CD4-positive, alpha-beta memory T cell (primary cell): ENCODE measurements at regions of chr5 and their contacts with region 1.

Region 1: GRCh38 chr5:157820593-157821252 is 38.2 kb downstream of the CLINT1 start:
- DNase-seq: peak in 4 of 5 donors; percentile 23 to 28 (median 27)
- H3K4me3 ChIP-seq: no peak overlapping the region
- H3K4me3 Mint-ChIP-seq: peak overlapping the region in 1 of 8 donors; percentile 28
- H3K27ac ChIP-seq: no peak overlapping the region
- H3K27ac Mint-ChIP-seq: peak overlapping the region in 5 of 7 donors; percentile 14 to 73 (median 61)
- H3K4me1 ChIP-seq: peaks cover 9% of the 10 kb centered on the region
- H3K4me1 Mint-ChIP-seq: peaks cover 23 to 41% (median 33%) of the 10 kb centered on the region in 4 donors
- H3K27me3 ChIP-seq: no peaks in the 10 kb centered on the region
- H3K27me3 Mint-ChIP-seq: no peaks in the 10 kb centered on the region

Region 2: GRCh38 chr5:157721159-157721558 is 99.6 kb before region 1 on chr5:
- CTCF ChIA-PET with region 1: no interaction called
- POLR2A ChIA-PET with region 1: no interaction called
- intact Hi-C with region 1: no loop called
- DNase-seq: no peak
- H3K4me3 ChIP-seq: no peak overlapping the region
- H3K4me3 Mint-ChIP-seq: no peak overlapping the region
- H3K27ac ChIP-seq: no peak overlapping the region
- H3K27ac Mint-ChIP-seq: no peak overlapping the region
- H3K4me1 ChIP-seq: peaks cover 21% of the 10 kb centered on the region
- H3K4me1 Mint-ChIP-seq: peaks cover 15 to 26% (median 20%) of the 10 kb centered on the region in 4 donors
- H3K27me3 ChIP-seq: no peaks in the 10 kb centered on the region
- H3K27me3 Mint-ChIP-seq: no peaks in the 10 kb centered on the region

Region 3: GRCh38 chr5:157858527-157859226 is 38.0 kb after region 1 on chr5 and contains the start of gene CLINT1:
- CTCF ChIA-PET with region 1: interaction called, 4 read pairs
- POLR2A ChIA-PET with region 1: interaction called, 3 read pairs
- intact Hi-C with region 1: loop called (anchors 5 kb)
- DNase-seq: peak; percentile 81 to 88 (median 85)
- H3K4me3 ChIP-seq: peak within 1 kb of the TSS; percentile 54 to 82
- H3K4me3 Mint-ChIP-seq: peak within 1 kb of the TSS; percentile 94 to 99 (median 95)
- H3K27ac ChIP-seq: peak within 1 kb of the TSS; percentile 85
- H3K27ac Mint-ChIP-seq: peak within 1 kb of the TSS; percentile 94 to 99 (median 97)
- H3K4me1 ChIP-seq: peaks cover 59% of the 10 kb centered on the region
- H3K4me1 Mint-ChIP-seq: peaks cover 49 to 74% (median 60%) of the 10 kb centered on the region in 4 donors
- H3K27me3 ChIP-seq: no peaks in the 10 kb centered on the region
- H3K27me3 Mint-ChIP-seq: no peaks in the 10 kb centered on the region
- total RNA-seq, gene CLINT1: 70.5 to 73.9 TPM

Region 4: GRCh38 chr5:157917899-157918809 is 97.4 kb after region 1 on chr5:
- CTCF ChIA-PET with region 1: interaction called, 5 read pairs
- POLR2A ChIA-PET with region 1: no interaction called
- intact Hi-C with region 1: loop called (anchors 1 kb)
- DNase-seq: peak; percentile 26 to 52 (median 41)
- H3K4me3 ChIP-seq: no peak overlapping the region
- H3K4me3 Mint-ChIP-seq: peak overlapping the region in 5 of 8 donors; percentile 39 to 81 (median 63)
- H3K27ac ChIP-seq: no peak overlapping the region
- H3K27ac Mint-ChIP-seq: peak overlapping the region in 6 of 7 donors; percentile 46 to 94 (median 49)
- H3K4me1 ChIP-seq: peaks cover 23% of the 10 kb centered on the region
- H3K4me1 Mint-ChIP-seq: peaks cover 22 to 28% (median 27%) of the 10 kb centered on the region in 4 donors
- H3K27me3 ChIP-seq: no peaks in the 10 kb centered on the region
- H3K27me3 Mint-ChIP-seq: no peaks in the 10 kb centered on the region

Region 5: GRCh38 chr5:157994906-157995519 is 174.3 kb after region 1 on chr5:
- CTCF ChIA-PET with region 1: interaction called, 15 read pairs
- POLR2A ChIA-PET with region 1: no interaction called
- intact Hi-C with region 1: loop called (anchors 1 kb)
- DNase-seq: peak; percentile 31 to 40 (median 34)
- H3K4me3 ChIP-seq: peak overlapping the region; percentile 2 to 15
- H3K4me3 Mint-ChIP-seq: peak overlapping the region; percentile 66 to 84 (median 76)
- H3K27ac ChIP-seq: no peak overlapping the region
- H3K27ac Mint-ChIP-seq: peak overlapping the region in 2 of 7 donors; percentile 11 to 76
- H3K4me1 ChIP-seq: peaks cover 26% of the 10 kb centered on the region
- H3K4me1 Mint-ChIP-seq: peaks cover 16 to 33% (median 21%) of the 10 kb centered on the region in 4 donors
- H3K27me3 ChIP-seq: peaks cover 14% of the 10 kb centered on the region
- H3K27me3 Mint-ChIP-seq: peaks cover 26 to 28% of the 10 kb centered on the region in 2 donors

Region 6: DNA sequence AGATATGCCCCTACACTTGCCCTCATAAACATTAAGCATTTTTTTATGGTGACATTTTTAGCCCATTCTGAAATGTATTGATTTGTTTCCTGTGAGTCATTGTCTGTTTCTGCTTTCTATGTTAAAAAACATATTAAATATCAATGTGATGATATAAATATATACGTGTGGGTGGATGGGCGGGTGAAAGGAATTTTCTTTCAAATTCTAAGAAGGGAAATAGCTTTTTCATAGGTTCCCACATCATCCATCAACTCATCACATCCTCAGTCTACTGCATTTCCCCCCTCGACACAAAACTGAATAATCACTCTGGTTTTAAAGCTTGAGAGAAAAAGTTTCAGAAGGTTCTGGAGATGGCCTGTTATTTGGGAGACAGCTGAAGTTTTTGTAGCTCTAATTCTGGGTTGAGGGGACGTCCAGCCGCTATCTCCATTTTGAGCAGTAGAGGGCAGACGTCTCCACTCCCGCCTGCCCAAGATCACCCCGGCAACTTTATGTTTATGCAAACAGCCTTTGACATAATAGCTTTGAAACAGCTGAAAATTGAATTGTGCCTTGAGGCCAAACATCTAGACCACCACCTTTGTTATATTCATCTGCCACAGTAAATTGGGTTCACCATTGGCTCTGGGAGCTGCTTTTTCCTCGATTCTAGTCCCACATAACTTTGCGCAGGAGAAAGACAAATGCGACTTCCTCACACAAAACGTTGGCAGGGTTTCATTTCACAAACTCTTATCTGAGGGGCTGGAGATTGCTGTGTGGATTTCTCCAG is 254.5 kb after region 1 on chr5:
- CTCF ChIA-PET with region 1: interaction called, 13 read pairs
- POLR2A ChIA-PET with region 1: no interaction called
- intact Hi-C with region 1: loop called (anchors 5 kb)
- DNase-seq: peak in 4 of 5 donors; percentile 41 to 47 (median 46)
- H3K4me3 ChIP-seq: no peak overlapping the region
- H3K4me3 Mint-ChIP-seq: peak overlapping the region in 1 of 8 donors; percentile 29
- H3K27ac ChIP-seq: no peak overlapping the region
- H3K27ac Mint-ChIP-seq: peak overlapping the region in 4 of 7 donors; percentile 1 to 78 (median 44)
- H3K4me1 ChIP-seq: peaks cover 4% of the 10 kb centered on the region
- H3K4me1 Mint-ChIP-seq: peaks cover 0 to 5% (median 4%) of the 10 kb centered on the region in 4 donors
- H3K27me3 ChIP-seq: no peaks in the 10 kb centered on the region
- H3K27me3 Mint-ChIP-seq: peaks cover 0 to 7% of the 10 kb centered on the region in 2 donors